H1 (cell line): ENCODE measurements at regions of chr20 and their contacts with region 1.

Region 1: GRCh38 chr20:36199345-36200257 is 36.7 kb upstream of the AAR2 start:
- DNase-seq: peak; percentile 53 to 96
- H3K4me3 ChIP-seq: no peak overlapping the region
- H3K27ac ChIP-seq: no peak overlapping the region
- H3K4me1 ChIP-seq: no peaks in the 10 kb centered on the region
- H3K27me3 ChIP-seq: no peaks in the 10 kb centered on the region
- CTCF ChIP-seq: peak; percentile 84 to 97 (median 85)
- EP300 ChIP-seq: no peak
- POLR2A ChIP-seq: no peak
- RAD21 ChIP-seq: peak; percentile 85 to 86

Region 2: GRCh38 chr20:36050436-36051317 is 148.9 kb before region 1 on chr20:
- CTCF ChIA-PET with region 1: no interaction called
- POLR2A ChIA-PET with region 1: no interaction called
- DNase-seq: peak; percentile 85 to 94
- H3K4me3 ChIP-seq: peak overlapping the region; percentile 68 to 98 (median 74)
- H3K27ac ChIP-seq: peak overlapping the region; percentile 93; the same call in 1 of the 2 replicates
- H3K4me1 ChIP-seq: peaks cover 4 to 10% (median 6%) of the 10 kb centered on the region in 4 experiments; a peak in 6 of 7 replicates
- H3K27me3 ChIP-seq: no peaks in the 10 kb centered on the region
- CTCF ChIP-seq: no peak
- EP300 ChIP-seq: peak in 1 of 2 experiments; percentile 90; a peak in 2 of 3 replicates
- POLR2A ChIP-seq: peak; percentile 98 to 99
- RAD21 ChIP-seq: peak; percentile 3 to 11; a peak in 1 of 4 replicates

Region 3: GRCh38 chr20:36145877-36146707 is 53.5 kb before region 1 on chr20:
- CTCF ChIA-PET with region 1: interaction called, 14 read pairs
- POLR2A ChIA-PET with region 1: no interaction called
- DNase-seq: no peak
- H3K4me3 ChIP-seq: no peak overlapping the region
- H3K27ac ChIP-seq: no peak overlapping the region
- H3K4me1 ChIP-seq: no peaks in the 10 kb centered on the region; a peak in 1 of 7 replicates
- H3K27me3 ChIP-seq: no peaks in the 10 kb centered on the region; a peak in 1 of 7 replicates
- CTCF ChIP-seq: no peak
- EP300 ChIP-seq: no peak
- POLR2A ChIP-seq: no peak
- RAD21 ChIP-seq: no peak

Region 4: GRCh38 chr20:36181934-36182603 is 17.5 kb before region 1 on chr20:
- CTCF ChIA-PET with region 1: interaction called, 20 read pairs
- POLR2A ChIA-PET with region 1: no interaction called
- DNase-seq: no peak
- H3K4me3 ChIP-seq: no peak overlapping the region
- H3K27ac ChIP-seq: no peak overlapping the region
- H3K4me1 ChIP-seq: no peaks in the 10 kb centered on the region
- H3K27me3 ChIP-seq: no peaks in the 10 kb centered on the region; a peak in 1 of 7 replicates
- CTCF ChIP-seq: no peak
- EP300 ChIP-seq: no peak
- POLR2A ChIP-seq: no peak
- RAD21 ChIP-seq: no peak

Region 5: DNA sequence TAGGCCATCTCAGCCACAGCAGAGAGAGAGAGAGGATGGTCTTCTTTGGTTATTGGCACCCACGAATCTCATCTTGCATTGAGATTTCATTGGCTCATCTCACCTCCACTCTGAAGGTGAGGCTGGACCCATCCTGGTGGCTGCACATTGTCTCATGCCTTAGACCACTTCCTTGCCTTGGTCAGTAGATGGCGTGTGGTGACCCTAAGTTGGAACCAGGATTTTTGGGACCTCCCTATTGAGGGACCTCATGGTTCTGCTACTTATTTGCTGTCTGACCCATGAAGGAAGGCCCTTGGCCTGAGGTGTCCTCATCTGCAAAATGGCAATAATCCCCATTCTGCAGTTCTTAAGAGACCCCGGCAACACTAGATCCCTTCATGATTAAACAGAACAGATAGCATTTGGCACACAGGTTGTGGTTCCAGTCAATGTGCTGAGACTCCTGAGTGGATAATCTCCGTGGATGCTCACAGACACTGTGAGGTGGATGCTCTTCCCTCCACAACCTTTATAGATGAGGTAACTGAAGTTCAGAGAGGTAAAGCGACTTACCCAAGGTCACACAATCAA is 15.2 kb after region 1 on chr20:
- CTCF ChIA-PET with region 1: interaction called, 151 read pairs
- POLR2A ChIA-PET with region 1: no interaction called
- DNase-seq: no peak
- H3K4me3 ChIP-seq: no peak overlapping the region
- H3K27ac ChIP-seq: no peak overlapping the region
- H3K4me1 ChIP-seq: no peaks in the 10 kb centered on the region
- H3K27me3 ChIP-seq: peaks cover 0 to 2% (median 0%) of the 10 kb centered on the region in 4 experiments; a peak in 1 of 7 replicates
- CTCF ChIP-seq: peak; percentile 82 to 94 (median 84)
- EP300 ChIP-seq: no peak
- POLR2A ChIP-seq: no peak
- RAD21 ChIP-seq: peak; percentile 87 to 93

Region 6: DNA sequence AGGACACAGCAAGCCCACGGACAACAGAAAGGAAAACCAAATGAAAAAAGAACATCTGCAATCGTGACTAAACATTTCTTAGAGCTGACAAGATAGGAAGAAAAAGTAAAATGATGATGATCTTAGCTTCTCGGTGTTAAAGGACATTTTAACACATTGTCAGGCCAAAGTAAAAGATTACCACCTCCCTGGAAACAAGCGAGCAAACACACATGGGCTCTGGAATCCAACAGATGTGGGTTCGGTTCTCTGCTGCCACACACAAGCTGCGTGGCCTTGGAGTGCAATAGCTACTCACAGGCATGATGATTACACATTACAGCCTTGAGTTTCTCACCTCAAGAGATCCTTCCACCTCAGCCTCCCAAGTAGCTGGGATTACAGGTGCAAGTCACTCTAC is 29.2 kb after region 1 on chr20:
- CTCF ChIA-PET with region 1: interaction called, 15 read pairs
- POLR2A ChIA-PET with region 1: no interaction called
- DNase-seq: no peak
- H3K4me3 ChIP-seq: no peak overlapping the region
- H3K27ac ChIP-seq: no peak overlapping the region
- H3K4me1 ChIP-seq: no peaks in the 10 kb centered on the region
- H3K27me3 ChIP-seq: no peaks in the 10 kb centered on the region
- CTCF ChIP-seq: no peak
- EP300 ChIP-seq: no peak
- POLR2A ChIP-seq: no peak
- RAD21 ChIP-seq: no peak